ENCODE measurements at regions of chr21 and their contacts with region 1.

Region 1: DNA sequence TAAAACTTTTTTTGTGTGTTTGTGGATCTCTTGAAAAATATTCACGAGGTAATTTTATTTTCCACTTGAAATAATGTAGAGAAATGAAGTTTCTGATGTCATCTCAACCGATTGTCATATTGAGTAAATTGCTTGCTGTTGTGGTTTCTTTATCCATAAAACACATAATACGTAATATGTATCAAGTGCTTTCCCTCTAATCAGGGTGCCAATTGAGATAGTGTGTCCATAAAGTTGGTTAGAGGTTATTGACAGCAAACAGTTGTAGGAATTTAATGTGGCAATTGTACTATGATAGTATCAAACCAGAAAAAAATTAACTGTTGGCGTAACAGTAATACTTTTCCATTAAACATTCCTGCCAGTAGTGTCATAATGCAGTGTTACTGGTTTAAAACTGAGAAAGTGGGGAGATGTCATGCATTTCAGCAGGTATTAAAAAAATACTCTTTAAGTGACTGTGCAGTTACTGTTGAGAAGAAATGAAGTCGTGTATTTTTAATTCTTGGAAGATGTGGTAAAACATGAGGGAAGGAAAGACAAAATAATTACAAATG is 38.3 kb downstream of the USP25 start:
- DNase-seq: no peak
- H3K4me3 ChIP-seq: no peak overlapping the region
- H3K4me3 Mint-ChIP-seq: no peak overlapping the region
- H3K27ac ChIP-seq: no peak overlapping the region
- H3K27ac Mint-ChIP-seq: peak overlapping the region in 1 of 7 donors; percentile 75
- H3K4me1 ChIP-seq: peaks cover 6% of the 10 kb centered on the region
- H3K4me1 Mint-ChIP-seq: peaks cover 43 to 74% (median 50%) of the 10 kb centered on the region in 4 donors
- H3K27me3 ChIP-seq: no peaks in the 10 kb centered on the region
- H3K27me3 Mint-ChIP-seq: no peaks in the 10 kb centered on the region

Region 2: DNA sequence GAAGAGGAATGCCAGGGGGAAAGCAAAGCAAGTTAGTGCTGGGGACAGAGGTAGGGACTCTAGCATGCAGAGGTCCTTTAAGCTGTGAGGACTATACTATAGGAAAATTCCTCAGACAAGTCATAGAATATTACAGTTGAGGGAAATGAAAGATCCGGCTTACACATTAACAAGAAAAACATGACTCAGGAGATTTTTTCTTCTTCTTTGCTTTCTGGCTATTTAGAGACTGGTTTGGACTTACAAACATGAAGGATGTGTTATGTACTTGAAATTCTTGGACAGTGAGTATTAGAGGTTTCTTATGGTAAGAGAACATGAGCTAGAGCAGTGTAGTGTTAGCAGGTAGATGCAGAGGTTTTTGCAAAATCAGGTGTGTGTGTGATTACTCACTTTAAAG is 13.5 kb before region 1 on chr21:
- CTCF ChIA-PET with region 1: interaction called, 3 read pairs
- POLR2A ChIA-PET with region 1: no interaction called
- intact Hi-C with region 1: loop called (anchors 2 kb)
- DNase-seq: no peak
- H3K4me3 ChIP-seq: no peak overlapping the region
- H3K4me3 Mint-ChIP-seq: peak overlapping the region in 5 of 8 donors; percentile 0 to 70 (median 26)
- H3K27ac ChIP-seq: no peak overlapping the region
- H3K27ac Mint-ChIP-seq: peak overlapping the region in 2 of 7 donors; percentile 10 to 11
- H3K4me1 ChIP-seq: peaks cover 62% of the 10 kb centered on the region
- H3K4me1 Mint-ChIP-seq: peaks cover 60 to 89% (median 74%) of the 10 kb centered on the region in 4 donors
- H3K27me3 ChIP-seq: no peaks in the 10 kb centered on the region
- H3K27me3 Mint-ChIP-seq: no peaks in the 10 kb centered on the region

Region 3: DNA sequence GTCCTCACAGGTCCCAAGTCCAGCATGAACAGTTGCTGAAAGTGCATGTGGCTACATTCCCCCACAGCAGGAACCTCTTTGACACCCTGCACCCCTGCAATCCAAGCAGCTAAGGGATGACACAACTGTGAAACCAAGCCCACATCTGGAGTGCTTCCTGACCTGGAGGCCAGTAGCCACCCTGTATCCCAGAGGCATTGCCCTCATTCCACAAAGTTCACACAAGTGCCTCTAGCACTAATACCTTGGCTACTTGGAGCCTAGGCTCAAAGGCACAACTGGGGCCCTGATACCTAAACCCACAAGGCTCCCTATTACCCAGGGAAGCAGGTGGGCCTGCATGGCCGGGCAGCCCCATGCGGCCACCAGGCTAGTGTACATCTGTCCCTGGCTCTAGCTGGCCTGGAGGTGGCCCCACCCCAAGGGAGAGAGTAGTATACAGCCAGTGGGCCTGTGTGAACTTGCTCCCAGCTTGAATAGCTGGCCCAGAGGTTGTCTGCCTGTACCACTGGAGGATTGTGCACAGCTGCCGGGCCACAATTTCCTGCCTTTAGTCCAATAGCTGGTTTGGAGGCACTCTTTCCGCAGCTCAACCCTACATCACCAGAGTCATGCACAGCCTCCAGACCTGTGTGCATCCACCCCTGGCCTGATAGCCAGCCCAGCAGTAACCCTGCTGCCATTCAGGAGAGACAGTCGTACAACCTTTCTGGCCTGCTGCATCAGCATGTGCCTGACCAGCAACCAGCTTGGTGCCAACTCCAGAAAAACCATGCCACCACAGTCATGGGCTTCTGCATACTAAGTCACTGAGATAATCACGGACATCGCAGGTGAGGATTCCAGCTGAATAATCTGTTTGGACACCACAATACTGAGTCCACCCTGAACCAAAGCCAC is 13.9 kb after region 1 on chr21:
- CTCF ChIA-PET with region 1: no interaction called
- POLR2A ChIA-PET with region 1: no interaction called
- intact Hi-C with region 1: no loop called
- DNase-seq: no peak
- H3K4me3 ChIP-seq: no peak overlapping the region
- H3K4me3 Mint-ChIP-seq: peak overlapping the region in 1 of 8 donors; percentile 35
- H3K27ac ChIP-seq: no peak overlapping the region
- H3K27ac Mint-ChIP-seq: no peak overlapping the region
- H3K4me1 ChIP-seq: peaks cover 13% of the 10 kb centered on the region
- H3K4me1 Mint-ChIP-seq: peaks cover 28 to 59% (median 44%) of the 10 kb centered on the region in 4 donors
- H3K27me3 ChIP-seq: no peaks in the 10 kb centered on the region
- H3K27me3 Mint-ChIP-seq: no peaks in the 10 kb centered on the region

Region 4: DNA sequence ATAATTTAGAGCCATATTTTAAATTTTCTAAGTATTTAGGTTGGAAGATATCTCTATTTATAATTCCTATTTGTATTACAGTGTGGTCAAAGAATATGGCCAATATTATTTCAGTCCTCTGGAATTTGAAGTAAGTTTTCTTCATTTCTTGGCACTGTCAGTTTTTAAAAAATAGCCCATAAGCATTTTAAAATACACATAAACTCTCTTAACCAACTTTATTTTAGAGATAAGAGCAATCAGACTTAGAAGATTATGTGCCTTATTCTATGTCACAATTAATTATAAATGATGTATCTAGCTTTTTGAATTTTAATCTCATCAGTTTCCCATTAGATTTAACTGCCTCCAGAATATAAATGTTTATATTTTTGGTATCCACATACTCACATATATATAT is 92.4 kb after region 1 on chr21:
- CTCF ChIA-PET with region 1: no interaction called
- POLR2A ChIA-PET with region 1: no interaction called
- intact Hi-C with region 1: no loop called
- DNase-seq: no peak
- H3K4me3 ChIP-seq: no peak overlapping the region
- H3K4me3 Mint-ChIP-seq: no peak overlapping the region
- H3K27ac ChIP-seq: no peak overlapping the region
- H3K27ac Mint-ChIP-seq: no peak overlapping the region
- H3K4me1 ChIP-seq: peaks cover 20% of the 10 kb centered on the region
- H3K4me1 Mint-ChIP-seq: peaks cover 10 to 17% (median 15%) of the 10 kb centered on the region in 4 donors
- H3K27me3 ChIP-seq: no peaks in the 10 kb centered on the region
- H3K27me3 Mint-ChIP-seq: no peaks in the 10 kb centered on the region

Measured in CD4-positive, alpha-beta memory T cell (primary cell).